Caco-2 (cell line): ENCODE measurements at regions of chr1 and their contacts with region 1.

Region 1: GRCh38 chr1:98661544-98662268 is at the start of gene SNX7:
- DNase-seq: peak; percentile 78 to 87
- H3K4me3 ChIP-seq: peak within 1 kb of the TSS; percentile 71
- H3K4me3 Mint-ChIP-seq: peak within 1 kb of the TSS; percentile 75
- H3K27ac Mint-ChIP-seq: peak within 1 kb of the TSS; percentile 57
- H3K4me1 ChIP-seq: no peaks in the 10 kb centered on the region
- H3K4me1 Mint-ChIP-seq: no peaks in the 10 kb centered on the region
- H3K27me3 ChIP-seq: no peaks in the 10 kb centered on the region
- H3K27me3 Mint-ChIP-seq: no peaks in the 10 kb centered on the region
- CTCF ChIP-seq: no peak
- total RNA-seq, gene SNX7: 16.1 and 17.5 TPM in 2 replicates

Region 2: DNA sequence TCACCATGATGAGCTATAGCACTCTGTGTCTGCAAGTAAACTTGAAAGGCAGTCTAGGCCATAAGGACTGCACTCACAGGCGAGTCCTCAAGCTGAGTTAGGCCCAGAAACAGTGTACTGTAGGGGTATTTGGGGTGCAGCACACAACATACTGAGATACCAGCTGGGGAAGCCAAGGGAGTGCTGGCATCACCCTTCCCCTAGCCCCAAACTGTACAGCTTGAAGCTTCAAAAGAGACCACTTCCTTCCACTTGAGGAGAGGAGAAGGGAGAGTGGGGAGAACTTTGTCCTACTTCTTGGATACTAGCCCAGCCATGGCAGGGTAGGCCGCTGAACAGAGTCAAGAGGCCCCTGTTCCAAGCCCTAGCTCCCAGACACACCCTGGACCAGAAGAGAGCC is 24.4 kb before region 1 on chr1:
- CTCF ChIA-PET with region 1: no interaction called
- POLR2A ChIA-PET with region 1: no interaction called
- intact Hi-C with region 1: no loop called
- DNase-seq: no peak
- H3K4me3 ChIP-seq: no peak overlapping the region
- H3K4me3 Mint-ChIP-seq: no peak overlapping the region
- H3K27ac Mint-ChIP-seq: no peak overlapping the region
- H3K4me1 ChIP-seq: no peaks in the 10 kb centered on the region
- H3K4me1 Mint-ChIP-seq: no peaks in the 10 kb centered on the region
- H3K27me3 ChIP-seq: no peaks in the 10 kb centered on the region
- H3K27me3 Mint-ChIP-seq: peaks cover 3% of the 10 kb centered on the region
- CTCF ChIP-seq: no peak

Region 3: GRCh38 chr1:98651188-98651587 is 10.5 kb before region 1 on chr1:
- CTCF ChIA-PET with region 1: no interaction called
- POLR2A ChIA-PET with region 1: no interaction called
- intact Hi-C with region 1: no loop called
- DNase-seq: no peak
- H3K4me3 ChIP-seq: no peak overlapping the region
- H3K4me3 Mint-ChIP-seq: no peak overlapping the region
- H3K27ac Mint-ChIP-seq: no peak overlapping the region
- H3K4me1 ChIP-seq: no peaks in the 10 kb centered on the region
- H3K4me1 Mint-ChIP-seq: no peaks in the 10 kb centered on the region
- H3K27me3 ChIP-seq: no peaks in the 10 kb centered on the region
- H3K27me3 Mint-ChIP-seq: no peaks in the 10 kb centered on the region
- CTCF ChIP-seq: no peak

Region 4: DNA sequence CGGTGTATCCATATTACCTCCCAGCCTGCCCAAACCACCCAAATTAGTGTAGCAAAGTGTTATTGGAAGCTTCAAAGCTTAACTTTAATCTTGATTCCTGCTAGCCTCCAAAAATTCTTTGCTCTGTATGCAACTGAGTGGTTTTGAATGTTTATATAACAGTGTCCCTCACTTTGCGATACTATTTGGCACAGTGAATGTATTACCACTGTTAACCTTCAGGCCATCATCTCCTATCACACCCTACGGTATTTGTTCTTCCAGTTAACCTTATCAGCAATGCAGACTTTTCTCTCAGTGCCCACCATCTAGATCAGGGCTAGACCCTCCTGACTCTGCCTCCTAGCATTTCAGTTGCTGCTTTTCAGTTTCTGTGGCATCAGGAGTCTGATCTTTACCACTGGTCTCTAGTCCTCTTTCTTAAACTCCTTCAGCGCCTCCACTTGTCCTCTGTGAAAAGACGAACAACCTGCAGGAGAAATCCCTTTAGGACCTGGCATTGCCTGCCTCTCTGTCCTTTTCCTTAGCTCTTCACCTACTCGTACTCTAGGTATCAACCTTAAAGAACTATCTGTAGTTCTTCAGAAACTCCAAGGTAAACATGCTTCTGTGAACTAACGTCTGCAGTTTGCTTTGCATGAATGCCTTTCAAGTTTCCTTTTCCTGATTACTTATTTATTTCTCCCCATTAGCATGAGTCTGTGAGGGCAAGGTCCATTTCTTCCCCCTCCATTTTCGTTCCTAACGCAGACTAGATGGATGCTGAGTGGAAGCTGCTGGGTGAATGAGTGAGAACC is 71.5 kb after region 1 on chr1:
- CTCF ChIA-PET with region 1: no interaction called
- POLR2A ChIA-PET with region 1: no interaction called
- intact Hi-C with region 1: loop called (anchors 5 kb)
- DNase-seq: no peak
- H3K4me3 ChIP-seq: no peak overlapping the region
- H3K4me3 Mint-ChIP-seq: peak overlapping the region; percentile 44
- H3K27ac Mint-ChIP-seq: peak overlapping the region; percentile 68
- H3K4me1 ChIP-seq: peaks cover 25% of the 10 kb centered on the region
- H3K4me1 Mint-ChIP-seq: peaks cover 23% of the 10 kb centered on the region
- H3K27me3 ChIP-seq: no peaks in the 10 kb centered on the region
- H3K27me3 Mint-ChIP-seq: no peaks in the 10 kb centered on the region
- CTCF ChIP-seq: no peak